Naive thymus-derived CD4-positive, alpha-beta T cell (primary cell): ENCODE measurements at regions of chr6 and their contacts with region 1.

Region 1: GRCh38 chr6:106519460-106520394 is 109.6 kb downstream of the RTN4IP1 start:
- DNase-seq: peak; percentile 38 to 80 (median 72)
- ATAC-seq: peak; percentile 68
- H3K4me3 ChIP-seq: peak overlapping the region; percentile 69
- H3K4me3 Mint-ChIP-seq: peak overlapping the region; percentile 82 to 96 (median 93)
- H3K27ac ChIP-seq: peak overlapping the region; percentile 86
- H3K27ac Mint-ChIP-seq: peak overlapping the region; percentile 92 to 99 (median 95)
- H3K4me1 ChIP-seq: peaks cover 42 to 47% of the 10 kb centered on the region in 2 donors
- H3K4me1 Mint-ChIP-seq: peaks cover 36 to 87% (median 71%) of the 10 kb centered on the region in 7 donors
- H3K27me3 ChIP-seq: no peaks in the 10 kb centered on the region
- H3K27me3 Mint-ChIP-seq: no peaks in the 10 kb centered on the region

Region 2: GRCh38 chr6:104859225-104860146 is 1660.2 kb before region 1 on chr6 and contains the start of gene HACE1:
- CTCF ChIA-PET with region 1: no interaction called
- POLR2A ChIA-PET with region 1: no interaction called
- intact Hi-C with region 1: loop called in 1 of 2 experiments (anchors 10 kb)
- DNase-seq: peak; percentile 75 to 91 (median 89)
- ATAC-seq: peak; percentile 98
- H3K4me3 ChIP-seq: peak within 1 kb of the TSS; percentile 79
- H3K4me3 Mint-ChIP-seq: peak within 1 kb of the TSS; percentile 87 to 95 (median 92)
- H3K27ac ChIP-seq: peak within 1 kb of the TSS; percentile 69
- H3K27ac Mint-ChIP-seq: peak within 1 kb of the TSS; percentile 18 to 92 (median 86)
- H3K4me1 ChIP-seq: peaks cover 8 to 9% of the 10 kb centered on the region in 2 donors
- H3K4me1 Mint-ChIP-seq: peaks cover 10 to 30% (median 18%) of the 10 kb centered on the region in 7 donors
- H3K27me3 ChIP-seq: no peaks in the 10 kb centered on the region
- H3K27me3 Mint-ChIP-seq: peaks cover 3 to 20% (median 13%) of the 10 kb centered on the region in 5 donors
- total RNA-seq, gene HACE1: 11.4 to 17.1 (median 16.1) TPM

Region 3: GRCh38 chr6:106534564-106534982 is 14.8 kb after region 1 on chr6:
- CTCF ChIA-PET with region 1: interaction called, 3 read pairs
- POLR2A ChIA-PET with region 1: interaction called, 14 read pairs
- intact Hi-C with region 1: loop called (anchors 1 kb)
- DNase-seq: peak in 1 of 9 donors; percentile 53
- ATAC-seq: peak; percentile 50
- H3K4me3 ChIP-seq: no peak overlapping the region
- H3K4me3 Mint-ChIP-seq: peak overlapping the region in 5 of 10 donors; percentile 7 to 51 (median 43)
- H3K27ac ChIP-seq: no peak overlapping the region
- H3K27ac Mint-ChIP-seq: peak overlapping the region; percentile 2 to 88 (median 66)
- H3K4me1 ChIP-seq: peaks cover 19 to 28% of the 10 kb centered on the region in 2 donors
- H3K4me1 Mint-ChIP-seq: peaks cover 34 to 88% (median 80%) of the 10 kb centered on the region in 7 donors
- H3K27me3 ChIP-seq: no peaks in the 10 kb centered on the region
- H3K27me3 Mint-ChIP-seq: no peaks in the 10 kb centered on the region

Region 4: GRCh38 chr6:106556368-106556960 is 36.7 kb after region 1 on chr6:
- CTCF ChIA-PET with region 1: interaction called, 74 read pairs
- POLR2A ChIA-PET with region 1: no interaction called
- intact Hi-C with region 1: loop called (anchors 2 kb)
- DNase-seq: peak in 6 of 9 donors; percentile 25 to 61 (median 49)
- ATAC-seq: peak; percentile 64
- H3K4me3 ChIP-seq: no peak overlapping the region
- H3K4me3 Mint-ChIP-seq: no peak overlapping the region
- H3K27ac ChIP-seq: no peak overlapping the region
- H3K27ac Mint-ChIP-seq: peak overlapping the region in 4 of 9 donors; percentile 1 to 56 (median 33)
- H3K4me1 ChIP-seq: no peaks in the 10 kb centered on the region
- H3K4me1 Mint-ChIP-seq: peaks cover 0 to 21% (median 6%) of the 10 kb centered on the region in 7 donors
- H3K27me3 ChIP-seq: no peaks in the 10 kb centered on the region
- H3K27me3 Mint-ChIP-seq: no peaks in the 10 kb centered on the region

Region 5: DNA sequence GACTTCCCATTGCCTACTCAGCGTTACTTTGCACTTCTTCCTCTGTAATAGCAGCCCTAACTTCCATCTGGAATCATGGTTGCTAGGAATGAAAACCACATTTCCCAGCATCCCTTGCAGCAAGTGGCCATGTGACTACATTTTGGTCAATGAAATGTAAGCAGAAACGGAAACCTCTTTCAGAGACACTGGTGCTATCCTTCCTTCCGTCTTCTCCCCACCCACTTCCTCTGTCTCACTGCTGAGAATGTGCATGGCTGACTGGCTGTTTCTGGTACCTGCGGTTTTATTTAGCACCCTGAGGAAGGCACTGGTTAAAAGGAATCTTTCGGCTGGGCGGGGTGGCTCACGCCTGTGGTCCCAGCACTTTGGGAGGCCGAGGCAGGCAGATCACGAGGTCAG is 1197.0 kb after region 1 on chr6:
- CTCF ChIA-PET with region 1: no interaction called
- POLR2A ChIA-PET with region 1: no interaction called
- intact Hi-C with region 1: loop called in 1 of 2 experiments (anchors 5 kb)
- DNase-seq: peak; percentile 27 to 89 (median 85)
- ATAC-seq: peak; percentile 95
- H3K4me3 ChIP-seq: no peak overlapping the region
- H3K4me3 Mint-ChIP-seq: peak overlapping the region; percentile 43 to 81 (median 72)
- H3K27ac ChIP-seq: peak overlapping the region; percentile 49
- H3K27ac Mint-ChIP-seq: peak overlapping the region; percentile 82 to 97 (median 92)
- H3K4me1 ChIP-seq: peaks cover 47 to 57% of the 10 kb centered on the region in 2 donors
- H3K4me1 Mint-ChIP-seq: peaks cover 46 to 86% (median 74%) of the 10 kb centered on the region in 7 donors
- H3K27me3 ChIP-seq: no peaks in the 10 kb centered on the region
- H3K27me3 Mint-ChIP-seq: no peaks in the 10 kb centered on the region